Heart right ventricle (tissue), 16 donors: ENCODE measurements at regions of chr7 and their contacts with region 1.

Region 1: GRCh38 chr7:143884969-143885559 is 16.9 kb downstream of the TCAF1 start:
- DNase-seq: peak; percentile 30 to 31
- ATAC-seq: peak in 3 of 8 donors; percentile 12 to 52 (median 39)
- H3K4me3 ChIP-seq: peak overlapping the region in 9 of 10 donors; percentile 11 to 54 (median 37)
- H3K27ac ChIP-seq: no peak overlapping the region
- H3K4me1 ChIP-seq: peaks cover 0 to 31% (median 18%) of the 10 kb centered on the region in 9 donors
- H3K27me3 ChIP-seq: peaks cover 0 to 32% (median 0%) of the 10 kb centered on the region in 7 donors
- CTCF ChIP-seq: no peak

Region 2: GRCh38 chr7:144020360-144020759 is 135.3 kb after region 1 on chr7:
- intact Hi-C with region 1: loop called in 1 of 10 experiments (anchors 5 kb)
- DNase-seq: no peak
- ATAC-seq: peak in 7 of 8 donors; percentile 49 to 80 (median 66)
- H3K4me3 ChIP-seq: no peak overlapping the region
- H3K27ac ChIP-seq: peak overlapping the region in 5 of 10 donors; percentile 9 to 61 (median 41)
- H3K4me1 ChIP-seq: peaks cover 0 to 21% (median 4%) of the 10 kb centered on the region in 9 donors
- H3K27me3 ChIP-seq: no peaks in the 10 kb centered on the region
- CTCF ChIP-seq: no peak

Region 3: GRCh38 chr7:144436500-144436899 is 551.4 kb after region 1 on chr7:
- intact Hi-C with region 1: no loop called
- DNase-seq: no peak
- ATAC-seq: no peak
- H3K4me3 ChIP-seq: no peak overlapping the region
- H3K27ac ChIP-seq: no peak overlapping the region
- H3K4me1 ChIP-seq: no peaks in the 10 kb centered on the region
- H3K27me3 ChIP-seq: no peaks in the 10 kb centered on the region
- CTCF ChIP-seq: no peak